Naive thymus-derived CD4-positive, alpha-beta T cell (primary cell): ENCODE measurements at regions of chr13 and their contacts with region 1.

Region 1: DNA sequence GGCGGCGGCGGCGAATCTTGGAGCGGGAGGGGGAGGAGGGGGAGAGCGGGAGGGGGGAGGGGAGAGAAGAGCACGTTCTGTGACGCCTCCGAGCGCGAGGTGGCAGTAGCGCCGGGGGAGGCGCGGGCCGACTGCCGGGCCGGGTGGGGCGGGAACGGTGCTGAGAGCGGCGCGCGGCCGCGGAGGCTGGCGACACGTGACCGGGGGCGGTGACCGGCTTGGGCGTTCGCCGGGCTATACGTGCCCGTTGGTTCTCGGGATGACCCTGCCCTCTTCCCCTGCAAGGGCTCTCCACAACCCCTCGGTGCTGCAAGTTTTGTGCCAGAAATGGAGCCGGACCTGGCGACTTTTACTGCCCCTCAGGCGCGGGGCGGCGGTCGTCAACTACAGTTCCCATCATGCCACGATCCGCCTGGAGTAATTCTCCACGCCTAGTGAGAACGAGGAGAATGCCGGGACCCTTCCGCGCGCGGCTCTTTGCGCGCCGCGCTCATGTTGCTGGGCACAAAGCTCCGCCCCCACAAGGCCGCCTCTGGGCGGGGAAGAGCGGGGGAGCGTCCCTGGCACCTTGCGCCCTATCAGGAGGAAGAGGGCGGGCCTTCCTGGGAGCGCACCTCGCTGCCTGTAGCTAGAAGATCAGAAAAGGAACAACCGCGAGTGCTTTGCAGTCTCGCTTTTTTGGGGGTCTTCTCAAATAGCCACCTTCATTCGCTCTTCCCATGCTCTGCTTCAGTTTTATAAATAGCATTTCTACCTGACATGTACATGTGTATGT is at the start of gene KPNA3:
- DNase-seq: peak; percentile 86 to 97 (median 95)
- ATAC-seq: peak; percentile 93
- H3K4me3 ChIP-seq: peak within 1 kb of the TSS; percentile 96
- H3K4me3 Mint-ChIP-seq: peak within 1 kb of the TSS; percentile 87 to 99 (median 96)
- H3K27ac ChIP-seq: peak within 1 kb of the TSS; percentile 80
- H3K27ac Mint-ChIP-seq: peak within 1 kb of the TSS; percentile 91 to 98 (median 96)
- H3K4me1 ChIP-seq: peaks cover 19 to 23% of the 10 kb centered on the region in 2 donors
- H3K4me1 Mint-ChIP-seq: peaks cover 19 to 42% (median 31%) of the 10 kb centered on the region in 7 donors
- H3K27me3 ChIP-seq: no peaks in the 10 kb centered on the region
- H3K27me3 Mint-ChIP-seq: peaks cover 2 to 8% (median 3%) of the 10 kb centered on the region in 5 donors
- total RNA-seq, gene KPNA3: 17.0 to 38.7 (median 19.6) TPM

Region 2: GRCh38 chr13:48000778-48001628 is 1791.7 kb before region 1 on chr13 and contains the start of gene SUCLA2:
- CTCF ChIA-PET with region 1: no interaction called
- POLR2A ChIA-PET with region 1: no interaction called
- intact Hi-C with region 1: loop called in 1 of 2 experiments (anchors 1 kb)
- DNase-seq: peak; percentile 75 to 96 (median 88)
- ATAC-seq: peak; percentile 100
- H3K4me3 ChIP-seq: peak within 1 kb of the TSS; percentile 97
- H3K4me3 Mint-ChIP-seq: peak within 1 kb of the TSS; percentile 88 to 97 (median 96)
- H3K27ac ChIP-seq: peak within 1 kb of the TSS; percentile 81
- H3K27ac Mint-ChIP-seq: peak within 1 kb of the TSS; percentile 75 to 96 (median 91)
- H3K4me1 ChIP-seq: peaks cover 7 to 10% of the 10 kb centered on the region in 2 donors
- H3K4me1 Mint-ChIP-seq: peaks cover 24 to 48% (median 42%) of the 10 kb centered on the region in 7 donors
- H3K27me3 ChIP-seq: no peaks in the 10 kb centered on the region
- H3K27me3 Mint-ChIP-seq: peaks cover 0 to 2% (median 0%) of the 10 kb centered on the region in 5 donors
- total RNA-seq, gene SUCLA2: 20.0 to 36.6 (median 26.4) TPM

Region 3: DNA sequence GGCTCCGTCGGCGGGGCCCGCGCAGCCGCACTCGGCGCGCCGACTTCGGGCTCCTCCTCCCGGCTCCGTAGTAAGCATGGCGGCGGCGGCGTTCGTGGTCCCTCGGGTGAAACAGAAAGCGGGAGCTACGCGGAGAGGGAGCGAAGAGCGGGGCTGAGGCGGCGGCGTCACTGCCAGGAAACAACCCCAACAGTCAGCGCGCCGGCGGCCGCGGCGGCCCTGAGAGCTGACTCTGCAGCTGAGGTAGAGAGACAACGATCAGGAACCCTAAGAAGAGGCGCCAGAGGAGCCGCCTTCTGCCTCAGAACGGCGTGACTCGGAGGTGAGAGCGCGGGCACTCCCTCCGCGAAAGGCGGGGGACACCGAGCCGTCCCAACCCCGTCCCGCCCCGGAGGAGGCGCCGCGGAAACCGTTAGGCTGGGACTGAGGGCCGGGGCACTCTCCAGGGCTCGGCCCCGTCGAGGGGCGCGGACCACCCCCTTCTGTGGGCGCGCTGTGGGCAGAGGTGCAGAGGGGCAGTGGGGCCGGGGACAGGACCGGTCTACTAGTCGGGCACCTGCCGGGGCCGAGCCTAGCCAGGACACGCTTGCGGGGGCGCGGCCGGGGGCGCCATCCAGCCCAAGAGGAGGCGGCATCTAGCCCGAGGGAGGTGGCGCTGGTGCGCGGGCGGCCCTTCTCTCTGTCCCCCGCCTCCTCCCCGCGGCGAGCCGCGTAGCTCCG is 816.7 kb before region 1 on chr13 and contains the start of gene FNDC3A:
- CTCF ChIA-PET with region 1: no interaction called
- POLR2A ChIA-PET with region 1: interaction called, 4 read pairs
- intact Hi-C with region 1: loop called in 1 of 2 experiments (anchors 1 kb)
- DNase-seq: peak; percentile 84 to 90 (median 86)
- ATAC-seq: peak; percentile 87
- H3K4me3 ChIP-seq: peak within 1 kb of the TSS; percentile 82
- H3K4me3 Mint-ChIP-seq: peak within 1 kb of the TSS; percentile 92 to 100 (median 98)
- H3K27ac ChIP-seq: peak within 1 kb of the TSS; percentile 95
- H3K27ac Mint-ChIP-seq: peak within 1 kb of the TSS; percentile 93 to 99 (median 99)
- H3K4me1 ChIP-seq: peaks cover 13 to 28% of the 10 kb centered on the region in 2 donors
- H3K4me1 Mint-ChIP-seq: peaks cover 35 to 69% (median 49%) of the 10 kb centered on the region in 7 donors
- H3K27me3 ChIP-seq: no peaks in the 10 kb centered on the region
- H3K27me3 Mint-ChIP-seq: peaks cover 0 to 6% (median 0%) of the 10 kb centered on the region in 5 donors
- total RNA-seq, gene FNDC3A: 34.2 to 46.4 (median 39.1) TPM

Region 4: GRCh38 chr13:49132479-49133002 is 660.2 kb before region 1 on chr13:
- CTCF ChIA-PET with region 1: no interaction called
- POLR2A ChIA-PET with region 1: no interaction called
- intact Hi-C with region 1: no loop called
- DNase-seq: no peak
- ATAC-seq: no peak
- H3K4me3 ChIP-seq: no peak overlapping the region
- H3K4me3 Mint-ChIP-seq: no peak overlapping the region
- H3K27ac ChIP-seq: no peak overlapping the region
- H3K27ac Mint-ChIP-seq: peak overlapping the region in 6 of 9 donors; percentile 3 to 49 (median 18)
- H3K4me1 ChIP-seq: peaks cover 0 to 9% of the 10 kb centered on the region in 2 donors
- H3K4me1 Mint-ChIP-seq: peaks cover 7 to 30% (median 22%) of the 10 kb centered on the region in 7 donors
- H3K27me3 ChIP-seq: no peaks in the 10 kb centered on the region
- H3K27me3 Mint-ChIP-seq: no peaks in the 10 kb centered on the region

Region 5: GRCh38 chr13:49443704-49444523 is 348.8 kb before region 1 on chr13 and contains the starts of genes CAB39L and SETDB2:
- CTCF ChIA-PET with region 1: no interaction called
- POLR2A ChIA-PET with region 1: interaction called, 5 read pairs
- intact Hi-C with region 1: loop called (anchors 1 kb)
- DNase-seq: peak; percentile 91 to 100 (median 99)
- ATAC-seq: peak; percentile 95
- H3K4me3 ChIP-seq: peak within 1 kb of the TSS; percentile 92
- H3K4me3 Mint-ChIP-seq: peak within 1 kb of the TSS; percentile 91 to 97 (median 95)
- H3K27ac ChIP-seq: peak within 1 kb of the TSS; percentile 83
- H3K27ac Mint-ChIP-seq: peak within 1 kb of the TSS; percentile 95 to 99 (median 97)
- H3K4me1 ChIP-seq: peaks cover 22 to 35% of the 10 kb centered on the region in 2 donors
- H3K4me1 Mint-ChIP-seq: peaks cover 30 to 58% (median 53%) of the 10 kb centered on the region in 7 donors
- H3K27me3 ChIP-seq: no peaks in the 10 kb centered on the region
- H3K27me3 Mint-ChIP-seq: no peaks in the 10 kb centered on the region
- total RNA-seq, gene CAB39L: 2.9 to 5.9 (median 4.6) TPM
- total RNA-seq, gene SETDB2: 16.7 to 30.0 (median 20.3) TPM

Region 6: DNA sequence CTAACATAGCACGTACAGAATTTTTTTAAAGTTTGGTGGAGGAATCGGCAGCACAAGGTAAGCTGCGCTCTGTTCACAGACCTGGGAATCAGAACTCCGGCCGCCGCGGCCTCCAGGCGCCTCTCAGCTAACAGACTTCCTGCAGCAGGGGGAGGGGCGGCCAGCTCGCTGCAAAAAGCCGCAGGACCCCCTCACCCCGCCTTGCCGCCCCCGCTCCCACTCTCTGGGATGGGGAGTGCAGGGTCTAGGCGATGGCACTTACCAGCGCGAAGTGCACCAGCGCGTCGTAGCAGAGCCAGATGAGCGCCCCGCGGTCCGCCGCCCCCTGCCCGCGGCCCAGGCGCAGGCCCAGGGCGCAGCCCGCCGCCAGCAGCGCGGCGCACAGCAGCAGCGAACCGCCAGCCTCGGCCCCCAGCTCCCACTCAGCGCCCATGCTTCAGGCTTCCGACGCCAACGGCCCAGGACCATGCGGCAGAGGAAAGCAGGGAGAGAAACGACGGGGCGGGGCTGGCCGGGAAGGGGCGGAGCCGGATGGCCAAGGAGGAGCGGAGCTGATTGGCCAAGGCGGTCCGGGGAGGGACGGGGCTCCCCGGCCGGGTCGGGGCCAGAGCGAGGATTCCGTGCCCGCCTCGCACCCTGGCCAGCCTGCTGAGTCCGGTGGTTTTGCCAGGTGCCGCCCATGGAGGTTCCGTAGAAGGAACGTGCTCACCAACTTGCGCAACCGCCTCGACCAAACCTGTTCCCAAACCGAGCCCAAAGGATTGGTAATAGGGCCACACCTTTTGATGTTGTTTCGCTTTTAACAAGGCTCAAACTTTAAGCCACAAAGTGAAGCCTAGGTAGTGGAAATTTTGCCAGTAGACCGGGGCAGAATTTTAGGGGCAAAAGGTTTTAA is 101.5 kb before region 1 on chr13 and contains the start of gene EBPL:
- CTCF ChIA-PET with region 1: interaction called, 4 read pairs
- POLR2A ChIA-PET with region 1: interaction called, 18 read pairs
- intact Hi-C with region 1: loop called (anchors 1 kb)
- DNase-seq: peak; percentile 57 to 91 (median 73)
- ATAC-seq: peak; percentile 97
- H3K4me3 ChIP-seq: peak within 1 kb of the TSS; percentile 67
- H3K4me3 Mint-ChIP-seq: peak within 1 kb of the TSS; percentile 88 to 96 (median 92)
- H3K27ac ChIP-seq: peak within 1 kb of the TSS; percentile 56
- H3K27ac Mint-ChIP-seq: peak within 1 kb of the TSS; percentile 73 to 91 (median 81)
- H3K4me1 ChIP-seq: peaks cover 0 to 17% of the 10 kb centered on the region in 2 donors
- H3K4me1 Mint-ChIP-seq: peaks cover 21 to 58% (median 45%) of the 10 kb centered on the region in 7 donors
- H3K27me3 ChIP-seq: no peaks in the 10 kb centered on the region
- H3K27me3 Mint-ChIP-seq: no peaks in the 10 kb centered on the region
- total RNA-seq, gene EBPL: 13.3 to 34.9 (median 20.4) TPM

Region 7: DNA sequence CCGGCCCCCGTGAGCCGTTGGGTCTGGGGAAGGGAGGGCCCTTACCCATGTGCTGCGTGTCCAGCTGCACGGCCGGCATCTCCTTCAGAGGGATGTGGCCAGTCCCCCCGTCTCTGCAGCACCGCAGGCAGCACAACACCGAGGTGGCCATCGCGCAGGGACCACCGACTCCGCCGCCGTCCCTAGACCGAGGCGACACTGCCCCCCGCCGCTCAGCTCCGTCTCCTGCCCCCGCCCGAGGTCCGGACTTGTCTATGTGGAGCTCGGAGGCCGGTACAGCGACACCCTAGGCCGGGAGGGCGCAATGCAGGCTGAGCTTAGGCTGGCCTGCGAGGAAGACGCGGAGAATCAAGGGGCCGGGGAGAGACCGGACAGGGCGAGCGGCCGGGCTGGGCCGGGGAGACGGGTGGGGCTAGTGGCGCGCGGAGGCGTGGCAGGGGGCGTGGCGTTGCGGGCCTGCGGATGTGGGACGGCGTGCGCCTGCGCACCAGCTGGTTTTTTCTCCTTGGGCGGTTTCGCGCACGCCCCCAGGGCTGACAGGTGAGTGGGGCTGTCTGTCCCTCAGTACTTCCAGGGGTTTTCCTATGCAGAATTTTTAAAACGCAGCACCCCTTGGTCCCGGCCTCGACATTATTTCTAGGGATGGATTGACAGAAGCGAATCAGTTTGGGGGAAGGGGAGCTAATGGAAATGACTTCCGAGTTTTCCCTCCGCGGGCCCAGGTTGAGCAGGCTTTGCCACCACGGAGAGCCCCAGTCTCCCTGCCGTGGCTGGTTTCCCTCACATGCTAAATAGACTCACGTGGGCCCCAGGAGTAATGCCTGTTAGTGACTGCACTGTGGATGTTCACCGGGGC is 143.6 kb after region 1 on chr13 and contains the start of gene SPRYD7:
- CTCF ChIA-PET with region 1: no interaction called
- POLR2A ChIA-PET with region 1: interaction called, 3 read pairs
- intact Hi-C with region 1: loop called (anchors 1 kb)
- DNase-seq: peak; percentile 82 to 99 (median 90)
- ATAC-seq: peak; percentile 98
- H3K4me3 ChIP-seq: peak within 1 kb of the TSS; percentile 99
- H3K4me3 Mint-ChIP-seq: peak within 1 kb of the TSS; percentile 86 to 99 (median 96)
- H3K27ac ChIP-seq: peak within 1 kb of the TSS; percentile 69
- H3K27ac Mint-ChIP-seq: peak within 1 kb of the TSS; percentile 74 to 95 (median 86)
- H3K4me1 ChIP-seq: peaks cover 10 to 14% of the 10 kb centered on the region in 2 donors
- H3K4me1 Mint-ChIP-seq: peaks cover 12 to 28% (median 15%) of the 10 kb centered on the region in 7 donors
- H3K27me3 ChIP-seq: no peaks in the 10 kb centered on the region
- H3K27me3 Mint-ChIP-seq: peaks cover 0 to 33% (median 0%) of the 10 kb centered on the region in 5 donors
- total RNA-seq, gene SPRYD7: 1.7 to 3.1 (median 2.3) TPM

Region 8: GRCh38 chr13:50106559-50106958 is 313.8 kb after region 1 on chr13:
- CTCF ChIA-PET with region 1: no interaction called
- POLR2A ChIA-PET with region 1: no interaction called
- intact Hi-C with region 1: no loop called
- DNase-seq: peak in 3 of 9 donors; percentile 14 to 37 (median 29)
- ATAC-seq: peak; percentile 64
- H3K4me3 ChIP-seq: no peak overlapping the region
- H3K4me3 Mint-ChIP-seq: peak overlapping the region in 9 of 10 donors; percentile 30 to 81 (median 61)
- H3K27ac ChIP-seq: peak overlapping the region; percentile 38
- H3K27ac Mint-ChIP-seq: peak overlapping the region; percentile 74 to 94 (median 93)
- H3K4me1 ChIP-seq: peaks cover 16 to 21% of the 10 kb centered on the region in 2 donors
- H3K4me1 Mint-ChIP-seq: peaks cover 22 to 75% (median 56%) of the 10 kb centered on the region in 7 donors
- H3K27me3 ChIP-seq: no peaks in the 10 kb centered on the region
- H3K27me3 Mint-ChIP-seq: no peaks in the 10 kb centered on the region

Region 9: DNA sequence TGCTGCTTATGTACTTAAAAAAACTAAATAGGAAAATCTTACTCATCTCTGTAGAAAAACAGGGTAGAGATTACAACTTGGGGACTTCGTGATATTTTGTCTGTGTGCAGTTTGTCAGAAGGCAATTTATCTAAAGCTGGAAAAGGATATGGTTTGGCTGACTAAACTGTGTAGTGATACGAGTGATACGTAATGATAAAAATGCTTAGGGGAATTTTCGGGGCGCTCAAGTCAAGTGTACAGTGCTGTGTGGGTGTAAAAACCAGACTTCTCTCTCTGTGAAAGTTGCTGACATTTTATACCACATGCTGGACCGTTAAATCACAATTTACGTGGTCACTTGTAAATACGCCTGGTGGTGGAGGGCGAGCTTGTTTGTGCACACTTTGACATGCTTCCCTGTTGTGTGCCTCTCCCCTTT is 444.2 kb after region 1 on chr13:
- CTCF ChIA-PET with region 1: no interaction called
- POLR2A ChIA-PET with region 1: no interaction called
- intact Hi-C with region 1: loop called in 1 of 2 experiments (anchors 5 kb)
- DNase-seq: peak in 4 of 9 donors; percentile 5 to 38 (median 14)
- ATAC-seq: peak; percentile 88
- H3K4me3 ChIP-seq: peak overlapping the region; percentile 43
- H3K4me3 Mint-ChIP-seq: peak overlapping the region; percentile 38 to 78 (median 65)
- H3K27ac ChIP-seq: no peak overlapping the region
- H3K27ac Mint-ChIP-seq: peak overlapping the region; percentile 3 to 66 (median 15)
- H3K4me1 ChIP-seq: peaks cover 5 to 8% of the 10 kb centered on the region in 2 donors
- H3K4me1 Mint-ChIP-seq: peaks cover 6 to 40% (median 19%) of the 10 kb centered on the region in 7 donors
- H3K27me3 ChIP-seq: no peaks in the 10 kb centered on the region
- H3K27me3 Mint-ChIP-seq: peaks cover 0 to 68% (median 0%) of the 10 kb centered on the region in 5 donors